Activated T-helper 2 cell treated with anti-CD3 and anti-CD28 coated beads, Interferon-gamma antibody, Interleukin-2, Interleukin-4, amounts not matched to agents 10 μg/mL and 5 μg/mL and 100 μg/mL, durations not matched to agents 14 hours and 24 hours and 36 hours (primary cell): ENCODE measurements at regions of chr2 and their contacts with region 1.

Region 1: GRCh38 chr2:195533771-195534642 is 123.0 kb upstream of the SLC39A10 start:
- DNase-seq: peak; percentile 51
- H3K4me3 Mint-ChIP-seq: peak overlapping the region; percentile 70
- H3K27ac Mint-ChIP-seq: peak overlapping the region; percentile 86
- H3K4me1 Mint-ChIP-seq: peaks cover 80% of the 10 kb centered on the region
- H3K27me3 Mint-ChIP-seq: no peaks in the 10 kb centered on the region

Region 2: DNA sequence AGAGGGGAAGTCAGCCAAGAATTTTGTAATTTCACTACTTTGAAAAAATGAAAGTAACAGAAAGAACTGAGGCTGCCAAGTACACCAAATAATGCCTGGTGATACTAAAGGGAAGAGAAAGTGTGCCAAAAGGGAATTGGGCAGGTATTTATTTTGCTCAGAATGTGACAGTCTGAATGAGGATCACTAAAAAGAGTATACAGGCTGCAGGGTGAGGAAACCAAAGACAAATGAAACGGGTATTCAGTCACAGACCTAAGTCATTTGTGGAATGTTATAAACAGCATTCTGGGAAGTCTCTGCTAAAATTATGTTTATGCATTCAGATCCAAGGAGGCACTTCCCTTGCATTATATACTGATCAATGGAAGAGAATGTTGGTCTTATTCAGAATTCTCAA is 295.6 kb before region 1 on chr2:
- intact Hi-C with region 1: no loop called
- DNase-seq: no peak
- H3K4me3 Mint-ChIP-seq: no peak overlapping the region
- H3K27ac Mint-ChIP-seq: no peak overlapping the region
- H3K4me1 Mint-ChIP-seq: peaks cover 1% of the 10 kb centered on the region
- H3K27me3 Mint-ChIP-seq: no peaks in the 10 kb centered on the region

Region 3: DNA sequence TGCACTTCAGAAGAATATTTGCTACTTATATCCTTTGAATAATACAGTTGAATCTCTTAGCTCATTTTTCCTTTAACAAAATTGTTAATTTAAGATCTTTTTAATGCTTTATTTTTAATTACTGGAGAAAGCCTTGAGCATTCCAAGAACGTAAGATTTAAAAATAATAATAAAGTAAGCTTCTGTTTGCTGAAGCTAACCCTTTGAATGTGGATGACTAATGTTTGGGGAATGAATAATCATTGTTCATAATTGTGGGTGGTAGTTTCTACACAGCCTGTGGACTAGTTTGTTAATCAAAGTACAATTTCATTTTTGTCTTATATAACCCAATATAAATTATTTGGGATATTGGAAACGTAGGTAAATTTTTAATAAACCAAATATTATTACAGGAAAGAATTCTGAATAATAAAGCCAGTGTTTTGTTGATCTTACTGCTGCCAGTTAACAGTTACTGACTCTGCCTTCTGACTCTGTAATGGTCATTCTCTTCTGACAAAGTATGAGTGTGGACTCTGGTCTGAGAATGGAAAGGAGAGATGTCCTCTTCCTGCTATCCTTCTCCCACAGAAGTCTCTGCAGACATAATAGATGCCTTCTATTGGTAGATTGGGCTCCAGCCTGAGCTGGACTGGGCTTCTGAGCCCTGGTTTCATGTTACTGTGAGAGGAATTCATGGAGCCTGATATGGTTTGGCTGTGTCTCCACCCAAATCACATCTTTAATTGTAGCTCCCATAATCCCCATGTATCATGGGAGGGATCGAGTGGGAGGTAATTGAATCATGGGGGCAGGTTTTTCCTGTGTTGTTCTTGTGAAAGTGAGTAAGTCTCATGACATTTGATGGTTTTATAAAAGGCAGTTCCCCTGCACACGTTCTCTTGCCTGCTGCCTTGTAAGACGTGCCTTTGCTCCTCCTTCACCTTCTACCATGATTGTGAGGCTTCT is 169.7 kb before region 1 on chr2:
- intact Hi-C with region 1: loop called (anchors 2 kb)
- DNase-seq: no peak
- H3K4me3 Mint-ChIP-seq: no peak overlapping the region
- H3K27ac Mint-ChIP-seq: no peak overlapping the region
- H3K4me1 Mint-ChIP-seq: peaks cover 22% of the 10 kb centered on the region
- H3K27me3 Mint-ChIP-seq: no peaks in the 10 kb centered on the region

Region 4: DNA sequence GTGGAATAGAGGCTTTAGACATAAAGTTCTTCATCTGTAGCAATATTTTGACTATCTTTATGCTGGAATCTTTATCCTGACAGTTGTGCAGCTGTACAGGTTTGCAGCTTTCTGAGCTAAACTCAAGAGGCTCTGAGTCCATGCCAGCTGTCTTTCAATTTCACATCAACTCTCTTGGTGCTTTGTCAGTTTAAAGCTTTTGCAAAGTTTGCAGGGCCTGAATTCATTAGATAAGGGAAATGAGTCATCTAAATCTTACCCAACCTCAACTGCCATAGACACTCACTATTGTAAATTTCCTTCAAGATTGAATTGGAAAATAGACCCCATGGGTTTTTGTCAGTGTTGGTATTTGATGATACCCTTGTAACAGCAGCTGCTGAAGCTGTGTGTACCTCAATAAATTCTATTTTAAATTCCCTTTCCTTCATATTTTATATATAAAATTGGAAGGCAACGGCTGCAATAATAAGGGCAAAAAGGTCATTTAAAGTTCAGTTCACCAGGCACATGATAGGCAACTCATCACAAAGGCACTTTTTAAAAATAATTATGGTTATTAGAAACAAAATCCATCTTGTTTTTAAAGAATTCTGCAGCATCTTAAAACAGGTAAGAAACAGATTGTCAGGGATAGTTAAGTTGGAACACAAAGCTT is 46.9 kb before region 1 on chr2:
- intact Hi-C with region 1: loop called (anchors 1 kb)
- DNase-seq: peak; percentile 28
- H3K4me3 Mint-ChIP-seq: no peak overlapping the region
- H3K27ac Mint-ChIP-seq: peak overlapping the region; percentile 45
- H3K4me1 Mint-ChIP-seq: peaks cover 44% of the 10 kb centered on the region
- H3K27me3 Mint-ChIP-seq: no peaks in the 10 kb centered on the region

Region 5: GRCh38 chr2:195520671-195521155 is 13.3 kb before region 1 on chr2:
- intact Hi-C with region 1: no loop called
- DNase-seq: no peak
- H3K4me3 Mint-ChIP-seq: no peak overlapping the region
- H3K27ac Mint-ChIP-seq: no peak overlapping the region
- H3K4me1 Mint-ChIP-seq: peaks cover 21% of the 10 kb centered on the region
- H3K27me3 Mint-ChIP-seq: no peaks in the 10 kb centered on the region

Region 6: GRCh38 chr2:195559431-195559914 is 25.5 kb after region 1 on chr2:
- intact Hi-C with region 1: loop called (anchors 1 kb)
- DNase-seq: peak; percentile 82
- H3K4me3 Mint-ChIP-seq: peak overlapping the region; percentile 56
- H3K27ac Mint-ChIP-seq: peak overlapping the region; percentile 90
- H3K4me1 Mint-ChIP-seq: peaks cover 57% of the 10 kb centered on the region
- H3K27me3 Mint-ChIP-seq: no peaks in the 10 kb centered on the region

Region 7: DNA sequence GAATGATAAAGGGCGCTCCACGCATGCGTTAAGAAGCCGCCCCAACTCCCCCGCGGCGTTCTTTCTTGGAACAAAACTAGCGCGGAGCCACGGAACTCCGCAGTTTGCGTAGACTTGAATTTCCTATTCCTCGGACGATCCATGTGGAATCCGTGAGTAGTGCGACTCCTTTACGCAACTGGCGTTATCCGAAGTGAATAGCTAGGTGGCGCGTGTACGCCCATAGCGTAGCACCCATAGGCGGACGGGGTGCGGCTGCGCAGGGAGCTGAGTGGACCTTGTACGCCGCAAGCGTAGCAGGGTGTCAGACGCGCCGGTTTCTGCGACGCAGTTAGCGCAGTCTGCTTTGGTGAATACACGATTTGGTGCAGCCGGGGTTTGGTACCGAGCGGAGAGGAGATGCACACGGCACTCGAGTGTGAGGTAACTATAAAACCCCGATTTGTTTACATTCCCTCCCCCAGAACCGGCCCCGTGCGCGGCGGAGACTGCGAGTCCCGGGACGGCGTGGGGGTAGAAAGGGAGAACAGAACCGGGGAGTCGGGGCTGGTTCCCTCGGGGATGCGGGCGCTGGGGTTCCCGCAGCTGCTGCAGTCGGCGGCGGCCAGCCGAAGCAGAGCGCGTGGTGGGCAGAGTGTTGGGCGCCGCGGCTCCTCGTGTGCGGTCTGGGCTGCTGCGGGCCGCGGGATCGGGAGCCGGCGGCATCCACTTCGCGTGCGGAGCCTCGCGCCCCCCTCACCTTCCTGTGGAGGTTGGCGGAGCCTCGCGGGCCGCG is 123.0 kb after region 1 on chr2 and contains the start of gene SLC39A10:
- intact Hi-C with region 1: loop called (anchors 1 kb)
- DNase-seq: peak; percentile 97
- H3K4me3 Mint-ChIP-seq: peak within 1 kb of the TSS; percentile 94
- H3K27ac Mint-ChIP-seq: peak within 1 kb of the TSS; percentile 100
- H3K4me1 Mint-ChIP-seq: peaks cover 25% of the 10 kb centered on the region
- H3K27me3 Mint-ChIP-seq: no peaks in the 10 kb centered on the region
- total RNA-seq, gene SLC39A10: 27.2 and 27.6 TPM in 2 replicates

Region 8: GRCh38 chr2:196171248-196171871 is 637.4 kb after region 1 on chr2 and contains the start of gene STK17B:
- intact Hi-C with region 1: loop called (anchors 10 kb)
- DNase-seq: peak; percentile 94
- H3K4me3 Mint-ChIP-seq: peak within 1 kb of the TSS; percentile 96
- H3K27ac Mint-ChIP-seq: peak within 1 kb of the TSS; percentile 93
- H3K4me1 Mint-ChIP-seq: peaks cover 44% of the 10 kb centered on the region
- H3K27me3 Mint-ChIP-seq: no peaks in the 10 kb centered on the region
- total RNA-seq, gene STK17B: 176 and 178 TPM in 2 replicates

Region 9: DNA sequence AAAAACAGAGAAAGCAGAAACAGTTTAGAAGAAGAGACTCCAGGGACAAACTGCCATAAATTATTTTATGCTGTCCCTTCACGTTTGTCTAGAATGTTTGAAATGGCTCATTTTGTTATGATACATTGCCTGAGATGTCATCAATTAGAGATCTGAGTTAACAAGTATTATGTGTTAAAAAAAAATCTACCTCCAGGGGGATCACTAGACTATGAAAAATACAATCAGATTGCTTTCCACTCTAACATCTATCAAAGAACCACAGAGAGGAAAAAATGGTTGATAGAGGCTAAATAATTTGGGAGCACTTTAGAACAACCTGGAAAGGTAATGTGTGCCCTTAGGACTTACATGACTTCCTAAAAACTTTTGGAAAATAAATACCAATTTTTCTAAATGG is 1001.7 kb after region 1 on chr2:
- intact Hi-C with region 1: loop called (anchors 10 kb)
- DNase-seq: no peak
- H3K4me3 Mint-ChIP-seq: no peak overlapping the region
- H3K27ac Mint-ChIP-seq: no peak overlapping the region
- H3K4me1 Mint-ChIP-seq: peaks cover 28% of the 10 kb centered on the region
- H3K27me3 Mint-ChIP-seq: peaks cover 18% of the 10 kb centered on the region